CD8-positive, alpha-beta T cell (primary cell): ENCODE measurements at regions of chr2 and their contacts with region 1.

Region 1: GRCh38 chr2:202299712-202300111 is 34.1 kb downstream of the NOP58 start:
- DNase-seq: no peak
- ATAC-seq: no peak
- H3K4me3 ChIP-seq: no peak overlapping the region
- H3K4me3 Mint-ChIP-seq: no peak overlapping the region
- H3K27ac ChIP-seq: no peak overlapping the region
- H3K27ac Mint-ChIP-seq: no peak overlapping the region
- H3K4me1 ChIP-seq: no peaks in the 10 kb centered on the region
- H3K4me1 Mint-ChIP-seq: peaks cover 2% of the 10 kb centered on the region
- H3K27me3 ChIP-seq: no peaks in the 10 kb centered on the region
- H3K27me3 Mint-ChIP-seq: no peaks in the 10 kb centered on the region
- CTCF ChIP-seq: no peak

Region 2: GRCh38 chr2:202023198-202023903 is 276.4 kb before region 1 on chr2:
- CTCF ChIA-PET with region 1: no interaction called
- POLR2A ChIA-PET with region 1: no interaction called
- intact Hi-C with region 1: no loop called
- DNase-seq: no peak
- ATAC-seq: no peak
- H3K4me3 ChIP-seq: no peak overlapping the region
- H3K4me3 Mint-ChIP-seq: no peak overlapping the region
- H3K27ac ChIP-seq: no peak overlapping the region
- H3K27ac Mint-ChIP-seq: no peak overlapping the region
- H3K4me1 ChIP-seq: no peaks in the 10 kb centered on the region
- H3K4me1 Mint-ChIP-seq: no peaks in the 10 kb centered on the region
- H3K27me3 ChIP-seq: no peaks in the 10 kb centered on the region
- H3K27me3 Mint-ChIP-seq: peaks cover 7% of the 10 kb centered on the region
- CTCF ChIP-seq: no peak

Region 3: DNA sequence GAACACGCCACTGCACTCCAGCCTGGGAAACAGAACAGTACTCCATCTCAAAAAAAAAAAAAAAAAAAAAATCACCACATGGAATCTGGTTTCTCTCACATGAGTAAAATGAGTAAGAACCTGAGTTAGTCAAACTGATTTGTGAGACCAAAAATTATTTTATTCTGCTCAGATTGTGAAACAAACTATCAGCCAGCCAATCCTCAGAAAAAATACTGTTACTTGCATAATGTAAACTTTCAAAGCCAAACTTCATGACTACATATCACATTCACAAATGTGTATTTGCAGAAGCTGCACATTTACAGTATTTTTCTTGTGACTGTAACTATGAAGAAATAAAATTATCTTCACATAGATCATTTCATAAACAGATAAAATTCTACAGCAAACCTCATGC is 84.5 kb before region 1 on chr2:
- CTCF ChIA-PET with region 1: no interaction called
- POLR2A ChIA-PET with region 1: no interaction called
- intact Hi-C with region 1: loop called in 1 of 2 experiments (anchors 5 kb)
- DNase-seq: no peak
- ATAC-seq: no peak
- H3K4me3 ChIP-seq: no peak overlapping the region
- H3K4me3 Mint-ChIP-seq: no peak overlapping the region
- H3K27ac ChIP-seq: no peak overlapping the region
- H3K27ac Mint-ChIP-seq: no peak overlapping the region
- H3K4me1 ChIP-seq: no peaks in the 10 kb centered on the region
- H3K4me1 Mint-ChIP-seq: peaks cover 11% of the 10 kb centered on the region
- H3K27me3 ChIP-seq: no peaks in the 10 kb centered on the region
- H3K27me3 Mint-ChIP-seq: no peaks in the 10 kb centered on the region
- CTCF ChIP-seq: no peak